OCI-LY7 (cell line): ENCODE measurements at regions of chr18 and their contacts with region 1.

Region 1: GRCh38 chr18:23131693-23132319 is 3.5 kb upstream of the CABLES1 start:
- DNase-seq: peak; percentile 88
- H3K4me3 ChIP-seq: no peak overlapping the region
- H3K27ac ChIP-seq: peak overlapping the region; percentile 6
- H3K4me1 ChIP-seq: peaks cover 55% of the 10 kb centered on the region
- CTCF ChIP-seq: peak; percentile 95

Region 2: DNA sequence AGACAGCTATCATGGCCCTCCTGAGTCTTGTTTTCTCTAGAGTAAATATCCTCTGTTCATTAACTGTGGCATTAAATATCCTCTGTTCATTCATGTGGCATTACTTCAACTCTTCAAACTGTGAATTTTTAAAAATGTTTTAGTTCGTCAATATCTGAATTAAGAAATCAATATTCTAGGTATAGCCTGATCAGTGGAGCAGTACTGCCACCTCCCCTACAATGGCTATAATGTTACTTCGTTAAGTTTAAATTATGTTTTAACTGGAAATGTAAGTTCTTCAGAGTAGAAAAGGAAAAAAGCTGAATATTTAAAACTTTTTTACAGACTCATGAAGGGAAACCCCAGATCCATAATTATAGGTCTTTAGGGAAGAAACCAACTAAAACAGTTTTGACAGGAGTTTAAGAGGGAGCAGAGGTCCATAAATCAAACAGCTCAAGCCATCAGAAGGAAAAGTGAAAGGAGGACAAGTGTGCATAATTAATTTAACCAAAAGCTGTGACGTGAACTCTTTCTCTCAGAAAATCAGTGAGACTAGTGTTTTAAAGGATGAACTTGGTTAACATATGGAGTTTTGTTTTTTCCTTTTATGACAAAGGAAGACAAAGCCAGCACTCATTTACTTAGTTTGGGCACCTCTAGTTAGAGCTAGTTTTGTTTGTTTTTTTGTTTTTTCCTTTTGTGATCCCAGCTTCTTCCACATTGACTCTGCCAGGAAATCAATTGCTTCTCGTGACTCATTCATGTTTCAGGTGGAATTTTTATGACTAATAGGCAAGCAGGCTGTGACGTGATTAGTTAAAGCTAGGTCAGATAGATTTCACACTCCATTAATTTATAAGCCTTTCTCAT is 153.7 kb before region 1 on chr18:
- CTCF ChIA-PET with region 1: no interaction called
- POLR2A ChIA-PET with region 1: interaction called, 11 read pairs
- intact Hi-C with region 1: no loop called
- DNase-seq: no peak
- H3K4me3 ChIP-seq: no peak overlapping the region
- H3K27ac ChIP-seq: no peak overlapping the region
- H3K4me1 ChIP-seq: peaks cover 6% of the 10 kb centered on the region
- CTCF ChIP-seq: no peak

Region 3: DNA sequence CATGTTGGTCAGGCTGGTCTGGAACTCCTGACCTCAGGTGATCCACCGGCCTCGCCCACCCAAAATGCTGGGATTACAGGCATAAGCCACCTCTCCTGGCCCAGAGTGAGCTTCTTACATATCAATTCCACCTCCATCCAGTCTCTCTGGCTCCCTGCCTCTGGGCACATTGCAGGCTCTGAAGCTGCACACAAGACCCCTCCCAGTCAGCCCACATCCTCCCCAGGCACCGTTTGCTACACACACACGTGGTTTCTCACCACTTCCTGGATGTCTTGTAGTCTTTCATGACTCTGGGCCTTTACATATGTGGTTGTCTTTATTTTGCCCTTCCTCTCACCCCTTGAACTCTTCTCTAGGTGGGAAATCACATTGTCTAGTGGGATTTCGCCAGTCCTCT is 60.5 kb before region 1 on chr18:
- CTCF ChIA-PET with region 1: no interaction called
- POLR2A ChIA-PET with region 1: interaction called, 4 read pairs
- intact Hi-C with region 1: loop called (anchors 5 kb)
- DNase-seq: peak; percentile 95
- H3K4me3 ChIP-seq: peak overlapping the region; percentile 19
- H3K27ac ChIP-seq: peak overlapping the region; percentile 66
- H3K4me1 ChIP-seq: peaks cover 50% of the 10 kb centered on the region
- CTCF ChIP-seq: no peak

Region 4: GRCh38 chr18:23231340-23232021 is 99.7 kb after region 1 on chr18:
- CTCF ChIA-PET with region 1: interaction called, 7 read pairs
- POLR2A ChIA-PET with region 1: interaction called, 36 read pairs
- intact Hi-C with region 1: loop called (anchors 1 kb)
- DNase-seq: peak; percentile 92
- H3K4me3 ChIP-seq: peak overlapping the region; percentile 5
- H3K27ac ChIP-seq: peak overlapping the region; percentile 100
- H3K4me1 ChIP-seq: peaks cover 80% of the 10 kb centered on the region
- CTCF ChIP-seq: no peak

Region 5: DNA sequence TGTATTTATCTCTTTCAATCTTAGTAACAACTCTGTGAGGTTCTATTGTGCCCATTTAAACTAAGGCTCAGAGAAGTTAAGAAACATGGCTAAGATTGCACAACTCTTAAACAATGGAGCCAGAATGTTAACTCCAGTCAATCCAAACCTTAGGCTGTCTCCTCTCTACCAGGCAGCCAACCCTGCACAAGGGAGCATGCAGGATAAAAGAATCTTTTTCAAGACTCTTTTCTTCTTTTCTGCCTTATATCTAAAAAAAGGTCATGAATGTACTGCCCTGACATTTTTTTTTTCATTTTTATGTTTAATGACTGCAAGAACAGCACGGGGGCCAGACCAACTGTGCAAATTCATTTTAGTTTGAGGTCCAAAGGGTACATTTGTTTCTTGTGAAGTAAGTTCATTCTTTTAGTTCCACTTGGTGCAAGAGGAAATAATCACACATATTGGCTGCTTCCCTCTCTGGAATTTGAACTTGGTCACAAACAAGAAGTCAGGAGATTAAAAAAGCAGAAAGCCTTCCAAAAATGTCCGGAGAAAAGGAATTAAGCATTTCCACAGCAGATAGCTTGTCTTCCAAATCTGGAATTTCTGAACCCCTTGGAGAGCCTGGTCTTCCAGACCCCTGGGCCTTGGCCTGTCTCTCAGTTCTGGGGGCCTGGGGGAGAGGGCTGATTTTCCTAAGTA is 225.3 kb after region 1 on chr18:
- CTCF ChIA-PET with region 1: interaction called, 5 read pairs
- POLR2A ChIA-PET with region 1: interaction called, 7 read pairs
- intact Hi-C with region 1: loop called (anchors 1 kb)
- DNase-seq: no peak
- H3K4me3 ChIP-seq: no peak overlapping the region
- H3K27ac ChIP-seq: no peak overlapping the region
- H3K4me1 ChIP-seq: peaks cover 24% of the 10 kb centered on the region
- CTCF ChIP-seq: no peak

Region 6: DNA sequence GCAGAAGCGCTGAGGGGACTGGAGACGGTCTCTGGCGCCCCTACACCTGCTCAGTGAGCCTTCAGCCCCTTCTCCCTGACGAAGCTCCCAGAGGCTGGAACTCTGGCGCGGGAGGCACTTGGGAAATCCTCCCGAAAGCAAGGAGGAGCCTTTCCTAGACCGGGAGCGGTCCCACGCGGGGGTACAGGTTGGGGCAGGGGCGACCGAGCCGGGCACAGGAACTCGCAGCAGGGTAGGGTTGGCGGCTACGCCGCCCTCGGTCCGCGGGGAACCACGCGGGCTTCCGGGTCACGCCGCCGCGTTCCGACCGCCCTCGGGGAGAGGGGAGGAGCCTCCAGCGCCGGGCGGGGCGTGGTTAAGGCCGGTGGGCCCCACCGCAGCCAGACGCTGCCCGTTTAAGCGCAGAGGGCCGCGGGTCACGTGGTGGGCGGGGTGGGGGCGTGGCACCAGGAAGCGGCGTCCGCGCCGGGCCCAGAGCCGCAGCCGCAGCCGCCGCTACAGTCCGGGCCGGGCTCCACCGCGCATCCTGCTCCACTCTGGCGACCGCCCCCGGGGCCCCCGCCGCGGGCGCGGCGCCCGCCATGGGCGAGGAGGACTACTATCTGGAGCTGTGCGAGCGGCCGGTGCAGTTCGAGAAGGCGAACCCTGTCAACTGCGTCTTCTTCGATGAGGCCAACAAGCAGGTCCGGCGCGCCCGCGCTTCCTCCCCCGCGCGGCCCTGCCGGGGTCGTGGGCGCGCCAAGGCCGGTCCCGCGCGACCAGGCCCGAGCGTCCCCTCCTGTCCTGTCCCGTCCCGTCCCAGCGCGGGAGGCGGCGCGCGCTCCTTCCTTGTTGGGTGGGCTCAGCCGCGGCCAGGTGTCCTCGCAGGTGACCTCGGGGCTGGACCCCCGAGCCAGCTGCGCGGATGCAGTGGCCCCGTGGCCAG is 371.5 kb after region 1 on chr18 and contains the start of gene RMC1:
- CTCF ChIA-PET with region 1: no interaction called
- POLR2A ChIA-PET with region 1: interaction called, 6 read pairs
- intact Hi-C with region 1: loop called (anchors 2 kb)
- DNase-seq: peak; percentile 96
- H3K4me3 ChIP-seq: peak within 1 kb of the TSS; percentile 96
- H3K27ac ChIP-seq: peak within 1 kb of the TSS; percentile 72
- H3K4me1 ChIP-seq: peaks cover 40% of the 10 kb centered on the region
- CTCF ChIP-seq: peak; percentile 58
- total RNA-seq, gene RMC1: 28.4 and 32.8 TPM in 2 replicates